ENCODE measurements at regions of chr9 and their contacts with region 1.

Region 1: GRCh38 chr9:109872901-109873300 is 92.9 kb downstream of the PALM2AKAP2 start:
- DNase-seq: no peak
- H3K4me3 Mint-ChIP-seq: no peak overlapping the region
- H3K27ac Mint-ChIP-seq: no peak overlapping the region
- H3K4me1 Mint-ChIP-seq: peaks cover 4% of the 10 kb centered on the region
- H3K27me3 Mint-ChIP-seq: peaks cover 53% of the 10 kb centered on the region

Region 2: GRCh38 chr9:108951578-108951977 is 921.3 kb before region 1 on chr9:
- CTCF ChIA-PET with region 1: no interaction called
- DNase-seq: no peak
- H3K4me3 Mint-ChIP-seq: no peak overlapping the region
- H3K27ac Mint-ChIP-seq: no peak overlapping the region
- H3K4me1 Mint-ChIP-seq: no peaks in the 10 kb centered on the region
- H3K27me3 Mint-ChIP-seq: no peaks in the 10 kb centered on the region

Region 3: DNA sequence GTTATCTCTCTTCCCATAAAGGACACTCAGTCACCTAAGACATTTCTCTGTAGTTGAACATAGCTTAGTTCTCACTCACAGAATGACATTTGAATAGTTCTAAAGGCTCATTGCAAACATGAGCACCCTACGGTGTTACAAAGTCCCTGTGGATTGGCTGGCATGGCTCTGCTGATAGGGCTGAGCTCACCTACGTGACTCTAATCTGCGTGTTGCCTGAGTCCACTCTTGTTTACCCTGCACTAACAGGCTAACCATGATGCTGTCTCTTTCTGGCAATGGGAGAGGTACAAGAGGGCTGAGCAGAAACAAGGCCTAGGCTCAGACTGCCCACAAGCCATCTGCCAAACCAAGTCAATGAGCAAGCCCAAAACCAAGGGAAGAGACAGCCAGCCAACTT is 10.7 kb after region 1 on chr9:
- CTCF ChIA-PET with region 1: interaction called, 12 read pairs
- DNase-seq: no peak
- H3K4me3 Mint-ChIP-seq: no peak overlapping the region
- H3K27ac Mint-ChIP-seq: peak overlapping the region; percentile 54
- H3K4me1 Mint-ChIP-seq: peaks cover 51% of the 10 kb centered on the region
- H3K27me3 Mint-ChIP-seq: peaks cover 11% of the 10 kb centered on the region

Region 4: GRCh38 chr9:109934857-109935215 is 61.9 kb after region 1 on chr9:
- CTCF ChIA-PET with region 1: no interaction called
- DNase-seq: no peak
- H3K4me3 Mint-ChIP-seq: no peak overlapping the region
- H3K27ac Mint-ChIP-seq: no peak overlapping the region
- H3K4me1 Mint-ChIP-seq: peaks cover 34% of the 10 kb centered on the region
- H3K27me3 Mint-ChIP-seq: peaks cover 4% of the 10 kb centered on the region